Heart left ventricle (tissue), 16 donors: ENCODE measurements at regions of chr2 and their contacts with region 1.

Region 1: GRCh38 chr2:235433860-235434259 is 60.0 kb upstream of the AGAP1 start:
- DNase-seq: peak in 4 of 5 donors; percentile 66 to 84 (median 71)
- ATAC-seq: peak; percentile 82 to 96 (median 93)
- H3K4me3 ChIP-seq: no peak overlapping the region
- H3K27ac ChIP-seq: peak overlapping the region in 11 of 12 donors; percentile 56 to 79 (median 67)
- H3K4me1 ChIP-seq: peaks cover 0 to 22% (median 17%) of the 10 kb centered on the region in 12 donors
- H3K27me3 ChIP-seq: no peaks in the 10 kb centered on the region
- CTCF ChIP-seq: peak in 8 of 12 donors; percentile 10 to 42 (median 28)
- POLR2A ChIP-seq: no peak

Region 2: DNA sequence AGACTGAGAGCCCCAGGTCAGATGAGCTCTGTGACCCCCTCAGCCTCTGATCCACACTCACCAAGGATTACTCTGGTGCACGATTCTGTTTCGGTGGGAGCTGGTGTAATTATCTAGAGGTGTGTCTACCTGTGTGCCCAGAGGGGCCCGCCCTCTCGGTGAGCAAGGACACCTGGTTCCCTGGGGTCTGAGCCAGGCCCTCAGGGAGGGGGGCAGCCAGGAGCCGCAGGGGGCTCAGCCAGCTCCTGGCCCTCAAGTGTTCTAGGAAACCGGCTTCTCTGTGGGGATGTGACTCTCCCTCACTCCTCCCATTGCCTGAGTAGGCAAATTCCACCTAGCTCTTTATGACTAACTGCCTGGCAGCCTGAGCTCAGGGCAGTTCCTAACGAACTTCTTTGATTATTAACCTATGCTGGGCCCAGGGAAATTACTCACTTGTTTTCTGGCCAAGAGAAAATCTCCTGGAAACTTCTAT is 77.4 kb after region 1 on chr2:
- intact Hi-C with region 1: no loop called
- DNase-seq: peak in 1 of 5 donors; percentile 21
- ATAC-seq: peak in 2 of 4 donors; percentile 38 to 44
- H3K4me3 ChIP-seq: no peak overlapping the region
- H3K27ac ChIP-seq: no peak overlapping the region
- H3K4me1 ChIP-seq: peaks cover 0 to 9% (median 0%) of the 10 kb centered on the region in 12 donors
- H3K27me3 ChIP-seq: no peaks in the 10 kb centered on the region
- CTCF ChIP-seq: no peak
- POLR2A ChIP-seq: no peak

Region 3: GRCh38 chr2:235543104-235543762 is 109.4 kb after region 1 on chr2:
- intact Hi-C with region 1: loop called in 1 of 10 experiments (anchors 10 kb)
- DNase-seq: peak in 1 of 5 donors; percentile 26
- ATAC-seq: no peak
- H3K4me3 ChIP-seq: no peak overlapping the region
- H3K27ac ChIP-seq: no peak overlapping the region
- H3K4me1 ChIP-seq: peaks cover 0 to 24% (median 2%) of the 10 kb centered on the region in 12 donors
- H3K27me3 ChIP-seq: no peaks in the 10 kb centered on the region
- CTCF ChIP-seq: no peak
- POLR2A ChIP-seq: no peak